Activated CD8-positive, alpha-beta T cell treated with anti-CD3 and anti-CD28 coated beads for 36 hours (primary cell): ENCODE measurements at regions of chr9 and their contacts with region 1.

Region 1: DNA sequence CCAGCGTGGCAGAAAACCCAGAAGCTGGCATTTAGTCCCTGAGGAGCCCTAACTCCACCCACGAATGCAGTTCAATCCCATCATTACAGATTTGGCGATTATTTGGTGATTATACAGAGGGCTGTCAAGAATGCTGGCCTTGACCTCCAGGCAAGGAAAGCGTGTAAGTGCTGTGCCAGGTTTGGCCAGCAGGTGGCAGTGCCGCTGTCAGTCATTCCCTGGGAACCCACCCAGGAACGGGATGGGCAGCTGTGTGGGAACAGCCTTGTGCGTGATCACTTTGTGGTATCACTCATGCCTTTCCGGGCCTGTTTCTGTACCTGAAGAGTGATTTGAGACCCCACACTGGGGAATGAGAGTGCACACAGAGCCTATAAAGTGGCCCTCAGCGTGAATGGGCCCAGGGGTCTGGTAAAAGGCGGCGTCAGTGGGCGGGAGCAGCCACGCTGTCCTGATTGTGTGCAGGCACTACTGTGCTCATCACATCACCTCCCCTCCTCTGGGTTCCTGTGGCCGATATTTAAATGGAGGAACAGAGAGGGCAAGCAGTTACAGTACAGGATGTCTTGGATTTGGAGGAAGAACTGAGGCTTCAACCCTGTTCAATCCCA is 215.6 kb downstream of the ROR2 start:
- DNase-seq: peak; percentile 73
- ATAC-seq: peak; percentile 69
- H3K4me3 Mint-ChIP-seq: no peak overlapping the region
- H3K27ac Mint-ChIP-seq: no peak overlapping the region
- H3K4me1 Mint-ChIP-seq: no peaks in the 10 kb centered on the region
- H3K27me3 Mint-ChIP-seq: peaks cover 6% of the 10 kb centered on the region
- CTCF ChIP-seq: peak; percentile 96

Region 2: GRCh38 chr9:91718071-91718470 is 16.4 kb before region 1 on chr9:
- CTCF ChIA-PET with region 1: interaction called, 13 read pairs
- POLR2A ChIA-PET with region 1: no interaction called
- intact Hi-C with region 1: no loop called
- DNase-seq: no peak
- ATAC-seq: no peak
- H3K4me3 Mint-ChIP-seq: no peak overlapping the region
- H3K27ac Mint-ChIP-seq: no peak overlapping the region
- H3K4me1 Mint-ChIP-seq: peaks cover 7% of the 10 kb centered on the region
- H3K27me3 Mint-ChIP-seq: peaks cover 47% of the 10 kb centered on the region
- CTCF ChIP-seq: no peak

Region 3: GRCh38 chr9:91824601-91825305 is 90.3 kb after region 1 on chr9:
- CTCF ChIA-PET with region 1: no interaction called
- POLR2A ChIA-PET with region 1: no interaction called
- intact Hi-C with region 1: no loop called
- DNase-seq: no peak
- ATAC-seq: no peak
- H3K4me3 Mint-ChIP-seq: no peak overlapping the region
- H3K27ac Mint-ChIP-seq: no peak overlapping the region
- H3K4me1 Mint-ChIP-seq: no peaks in the 10 kb centered on the region
- H3K27me3 Mint-ChIP-seq: peaks cover 1% of the 10 kb centered on the region
- CTCF ChIP-seq: no peak